CD8-positive, alpha-beta T cell (primary cell): ENCODE measurements at regions of chr14 and their contacts with region 1.

Region 1: GRCh38 chr14:101707068-101707842 is 54.3 kb upstream of the PPP2R5C start:
- DNase-seq: peak in 7 of 9 experiments; percentile 53 to 93 (median 74)
- ATAC-seq: peak; percentile 69
- H3K4me3 ChIP-seq: no peak overlapping the region
- H3K4me3 Mint-ChIP-seq: peak overlapping the region; percentile 12
- H3K27ac ChIP-seq: peak overlapping the region; percentile 11 to 78
- H3K27ac Mint-ChIP-seq: peak overlapping the region; percentile 83
- H3K4me1 ChIP-seq: peaks cover 34% of the 10 kb centered on the region
- H3K4me1 Mint-ChIP-seq: peaks cover 31% of the 10 kb centered on the region
- H3K27me3 ChIP-seq: no peaks in the 10 kb centered on the region
- H3K27me3 Mint-ChIP-seq: no peaks in the 10 kb centered on the region
- CTCF ChIP-seq: peak; percentile 72

Region 2: DNA sequence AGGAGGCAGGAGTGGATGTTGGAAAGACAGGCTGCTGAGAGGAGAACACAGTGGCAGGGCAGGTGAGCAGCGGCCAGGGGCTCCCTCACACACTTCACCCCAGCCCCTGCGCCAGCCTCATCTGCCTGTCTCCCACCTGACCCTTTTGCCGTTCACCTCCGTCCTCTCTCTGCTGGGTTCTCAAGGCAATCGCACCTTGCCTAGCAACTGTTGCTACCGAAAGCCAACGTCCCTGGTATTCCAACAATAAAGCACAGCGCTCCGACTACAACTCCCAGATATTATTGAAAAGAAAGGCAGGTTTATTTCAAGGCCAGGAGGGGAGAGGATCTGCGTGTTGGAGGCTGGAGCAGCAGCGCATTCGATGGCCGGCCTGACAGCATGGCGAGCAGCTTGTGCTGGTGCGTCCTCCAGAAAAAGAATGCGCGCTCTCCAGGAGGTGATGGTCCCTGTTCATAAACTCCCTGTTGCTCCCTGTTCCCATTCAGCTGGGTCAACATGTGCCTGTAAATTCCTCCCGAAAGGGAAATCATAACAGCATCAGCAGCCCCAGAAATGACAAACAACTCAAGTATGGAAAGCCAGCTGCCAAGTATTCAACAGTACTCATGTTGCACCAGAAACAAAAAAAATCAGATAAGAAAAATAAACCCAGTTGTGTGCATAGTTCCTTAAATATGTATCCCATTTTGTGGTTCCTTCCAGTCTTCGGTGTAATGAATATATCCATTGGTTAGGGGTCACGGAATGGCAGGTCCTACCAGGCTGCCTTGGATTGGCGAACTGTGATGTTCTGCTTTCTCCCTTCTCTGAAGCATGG is 299.0 kb before region 1 on chr14:
- CTCF ChIA-PET with region 1: no interaction called
- POLR2A ChIA-PET with region 1: no interaction called
- intact Hi-C with region 1: no loop called
- DNase-seq: no peak
- ATAC-seq: no peak
- H3K4me3 ChIP-seq: no peak overlapping the region
- H3K4me3 Mint-ChIP-seq: no peak overlapping the region
- H3K27ac ChIP-seq: no peak overlapping the region
- H3K27ac Mint-ChIP-seq: no peak overlapping the region
- H3K4me1 ChIP-seq: no peaks in the 10 kb centered on the region
- H3K4me1 Mint-ChIP-seq: peaks cover 6% of the 10 kb centered on the region
- H3K27me3 ChIP-seq: no peaks in the 10 kb centered on the region
- H3K27me3 Mint-ChIP-seq: peaks cover 52% of the 10 kb centered on the region
- CTCF ChIP-seq: no peak

Region 3: GRCh38 chr14:101731187-101732080 is 24.2 kb after region 1 on chr14:
- CTCF ChIA-PET with region 1: interaction called, 16 read pairs
- POLR2A ChIA-PET with region 1: interaction called, 5 read pairs
- intact Hi-C with region 1: loop called (anchors 1 to 2 kb)
- DNase-seq: peak; percentile 50 to 96 (median 80)
- ATAC-seq: peak; percentile 87
- H3K4me3 ChIP-seq: peak overlapping the region; percentile 24 to 28
- H3K4me3 Mint-ChIP-seq: peak overlapping the region; percentile 76
- H3K27ac ChIP-seq: peak overlapping the region; percentile 76 to 83
- H3K27ac Mint-ChIP-seq: peak overlapping the region; percentile 97
- H3K4me1 ChIP-seq: peaks cover 23% of the 10 kb centered on the region
- H3K4me1 Mint-ChIP-seq: peaks cover 44% of the 10 kb centered on the region
- H3K27me3 ChIP-seq: no peaks in the 10 kb centered on the region
- H3K27me3 Mint-ChIP-seq: no peaks in the 10 kb centered on the region
- CTCF ChIP-seq: no peak

Region 4: DNA sequence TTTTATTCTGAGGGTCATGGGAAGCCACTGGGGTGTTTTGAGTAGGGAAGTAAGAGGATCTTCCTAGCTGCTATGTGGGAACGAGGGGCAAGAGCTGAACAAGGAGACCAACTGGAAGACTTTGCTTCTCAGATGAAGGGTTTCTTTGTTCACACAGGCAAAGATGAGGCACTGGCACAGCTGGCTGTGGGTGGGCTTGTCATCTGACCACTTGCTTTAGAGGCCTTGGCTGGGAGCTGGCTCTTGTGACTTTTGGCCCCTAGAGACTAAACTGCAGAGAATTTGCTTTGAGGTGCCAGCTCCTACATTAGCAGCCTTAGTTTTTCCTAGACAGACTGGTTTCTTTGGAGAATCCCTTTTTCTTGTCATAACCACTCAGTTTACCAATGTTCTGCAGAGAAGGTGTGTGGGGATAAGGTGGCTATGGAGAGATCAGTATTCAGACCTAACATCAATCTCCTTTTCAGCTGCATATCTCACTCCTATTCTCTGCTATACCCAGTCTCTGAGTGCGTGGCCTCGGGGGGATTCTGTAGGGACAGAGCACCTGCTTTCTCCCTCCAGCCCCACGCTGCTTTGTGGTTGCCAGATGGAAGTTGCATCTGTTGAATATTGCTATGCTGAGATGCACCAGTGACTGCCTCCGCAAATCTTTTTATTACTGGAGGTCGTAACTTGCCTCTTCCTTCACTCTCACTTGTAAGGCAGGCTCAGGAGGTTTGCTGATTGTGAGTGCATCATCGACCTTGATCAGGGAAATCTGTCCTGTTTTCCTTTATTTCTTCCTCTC is 66.9 kb after region 1 on chr14:
- CTCF ChIA-PET with region 1: interaction called, 45 read pairs
- POLR2A ChIA-PET with region 1: interaction called, 14 read pairs
- intact Hi-C with region 1: loop called (anchors 1 kb)
- DNase-seq: no peak
- ATAC-seq: no peak
- H3K4me3 ChIP-seq: no peak overlapping the region
- H3K4me3 Mint-ChIP-seq: no peak overlapping the region
- H3K27ac ChIP-seq: no peak overlapping the region
- H3K27ac Mint-ChIP-seq: peak overlapping the region; percentile 58
- H3K4me1 ChIP-seq: no peaks in the 10 kb centered on the region
- H3K4me1 Mint-ChIP-seq: peaks cover 37% of the 10 kb centered on the region
- H3K27me3 ChIP-seq: no peaks in the 10 kb centered on the region
- H3K27me3 Mint-ChIP-seq: no peaks in the 10 kb centered on the region
- CTCF ChIP-seq: no peak

Region 5: GRCh38 chr14:101843665-101844064 is 136.4 kb after region 1 on chr14:
- CTCF ChIA-PET with region 1: interaction called, 28 read pairs
- POLR2A ChIA-PET with region 1: interaction called, 5 read pairs
- intact Hi-C with region 1: loop called (anchors 1 kb)
- DNase-seq: peak in 8 of 9 experiments; percentile 24 to 89 (median 62)
- ATAC-seq: peak; percentile 70
- H3K4me3 ChIP-seq: no peak overlapping the region
- H3K4me3 Mint-ChIP-seq: peak overlapping the region; percentile 52
- H3K27ac ChIP-seq: peak overlapping the region in 1 of 2 experiments; percentile 21
- H3K27ac Mint-ChIP-seq: peak overlapping the region; percentile 90
- H3K4me1 ChIP-seq: peaks cover 67% of the 10 kb centered on the region
- H3K4me1 Mint-ChIP-seq: peaks cover 89% of the 10 kb centered on the region
- H3K27me3 ChIP-seq: no peaks in the 10 kb centered on the region
- H3K27me3 Mint-ChIP-seq: no peaks in the 10 kb centered on the region
- CTCF ChIP-seq: peak; percentile 72

Region 6: GRCh38 chr14:101899263-101899662 is 192.0 kb after region 1 on chr14:
- CTCF ChIA-PET with region 1: interaction called, 6 read pairs
- POLR2A ChIA-PET with region 1: no interaction called
- intact Hi-C with region 1: loop called (anchors 5 kb)
- DNase-seq: no peak
- ATAC-seq: no peak
- H3K4me3 ChIP-seq: no peak overlapping the region
- H3K4me3 Mint-ChIP-seq: no peak overlapping the region
- H3K27ac ChIP-seq: no peak overlapping the region
- H3K27ac Mint-ChIP-seq: no peak overlapping the region
- H3K4me1 ChIP-seq: no peaks in the 10 kb centered on the region
- H3K4me1 Mint-ChIP-seq: no peaks in the 10 kb centered on the region
- H3K27me3 ChIP-seq: no peaks in the 10 kb centered on the region
- H3K27me3 Mint-ChIP-seq: no peaks in the 10 kb centered on the region
- CTCF ChIP-seq: no peak

Region 7: DNA sequence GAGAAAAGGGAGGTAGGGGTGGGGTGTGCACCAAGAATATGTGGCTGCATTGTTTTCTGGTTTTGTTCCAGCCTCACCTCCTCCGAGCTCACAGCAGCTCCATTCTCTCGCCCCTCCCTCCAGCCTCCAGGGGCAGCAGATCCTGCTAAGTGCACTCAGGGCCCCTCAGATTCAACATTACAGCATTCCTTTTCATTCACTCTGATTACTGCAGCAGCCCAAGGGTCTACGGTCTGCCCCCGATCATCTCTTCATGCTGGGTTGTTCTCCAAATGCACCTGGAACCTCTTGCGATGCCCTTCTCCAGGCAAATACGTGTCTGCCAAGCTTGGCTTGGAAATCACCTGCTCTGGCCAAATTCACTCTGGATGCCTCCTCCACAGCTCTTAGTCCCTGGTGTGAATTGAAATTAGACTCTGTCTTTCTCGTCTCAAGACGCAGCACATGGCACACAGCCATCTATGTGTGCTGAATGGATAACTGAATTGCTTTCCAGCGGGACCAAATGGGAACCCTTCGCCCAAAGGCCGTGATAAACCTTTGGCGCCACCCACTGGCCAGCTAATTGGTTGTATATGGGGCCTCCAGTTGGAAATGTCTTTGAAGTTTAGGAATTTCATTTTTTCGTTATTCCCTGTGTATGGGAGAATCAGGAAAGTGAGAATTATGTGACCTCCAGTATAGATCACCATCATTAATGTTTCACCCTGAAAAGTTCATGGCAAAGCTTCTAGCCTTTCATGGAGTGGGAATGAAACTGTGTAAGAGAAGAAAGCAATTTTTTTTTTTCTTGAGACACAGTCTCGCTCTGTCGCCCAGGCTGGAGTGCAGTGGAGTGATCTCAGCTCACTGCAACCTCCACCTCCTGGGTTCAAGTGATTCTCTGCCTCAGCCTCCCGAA is 389.2 kb after region 1 on chr14:
- CTCF ChIA-PET with region 1: interaction called, 10 read pairs
- POLR2A ChIA-PET with region 1: no interaction called
- intact Hi-C with region 1: loop called (anchors 1 to 5 kb)
- DNase-seq: peak; percentile 40 to 83 (median 75)
- ATAC-seq: peak; percentile 80
- H3K4me3 ChIP-seq: no peak overlapping the region
- H3K4me3 Mint-ChIP-seq: no peak overlapping the region
- H3K27ac ChIP-seq: no peak overlapping the region
- H3K27ac Mint-ChIP-seq: no peak overlapping the region
- H3K4me1 ChIP-seq: no peaks in the 10 kb centered on the region
- H3K4me1 Mint-ChIP-seq: peaks cover 3% of the 10 kb centered on the region
- H3K27me3 ChIP-seq: no peaks in the 10 kb centered on the region
- H3K27me3 Mint-ChIP-seq: no peaks in the 10 kb centered on the region
- CTCF ChIP-seq: peak; percentile 89